ENCODE measurements at regions of chr7 and their contacts with region 1.

Region 1: GRCh38 chr7:148623586-148624282 is 33.2 kb downstream of the C7orf33 start:
- DNase-seq: no peak
- ATAC-seq: no peak
- H3K4me3 ChIP-seq: no peak overlapping the region
- H3K4me3 Mint-ChIP-seq: no peak overlapping the region
- H3K27ac ChIP-seq: no peak overlapping the region
- H3K27ac Mint-ChIP-seq: no peak overlapping the region
- H3K4me1 ChIP-seq: peaks cover 23% of the 10 kb centered on the region
- H3K4me1 Mint-ChIP-seq: peaks cover 50% of the 10 kb centered on the region
- H3K27me3 ChIP-seq: peaks cover 3 to 4% of the 10 kb centered on the region in 2 experiments
- H3K27me3 Mint-ChIP-seq: peaks cover 13% of the 10 kb centered on the region
- CTCF ChIP-seq: no peak

Region 2: GRCh38 chr7:147999962-148000361 is 623.8 kb before region 1 on chr7:
- CTCF ChIA-PET with region 1: no interaction called
- POLR2A ChIA-PET with region 1: no interaction called
- intact Hi-C with region 1: no loop called
- DNase-seq: no peak
- ATAC-seq: no peak
- H3K4me3 ChIP-seq: no peak overlapping the region
- H3K4me3 Mint-ChIP-seq: no peak overlapping the region
- H3K27ac ChIP-seq: no peak overlapping the region
- H3K27ac Mint-ChIP-seq: no peak overlapping the region
- H3K4me1 ChIP-seq: no peaks in the 10 kb centered on the region
- H3K4me1 Mint-ChIP-seq: no peaks in the 10 kb centered on the region
- H3K27me3 ChIP-seq: no peaks in the 10 kb centered on the region
- H3K27me3 Mint-ChIP-seq: no peaks in the 10 kb centered on the region
- CTCF ChIP-seq: no peak

Region 3: DNA sequence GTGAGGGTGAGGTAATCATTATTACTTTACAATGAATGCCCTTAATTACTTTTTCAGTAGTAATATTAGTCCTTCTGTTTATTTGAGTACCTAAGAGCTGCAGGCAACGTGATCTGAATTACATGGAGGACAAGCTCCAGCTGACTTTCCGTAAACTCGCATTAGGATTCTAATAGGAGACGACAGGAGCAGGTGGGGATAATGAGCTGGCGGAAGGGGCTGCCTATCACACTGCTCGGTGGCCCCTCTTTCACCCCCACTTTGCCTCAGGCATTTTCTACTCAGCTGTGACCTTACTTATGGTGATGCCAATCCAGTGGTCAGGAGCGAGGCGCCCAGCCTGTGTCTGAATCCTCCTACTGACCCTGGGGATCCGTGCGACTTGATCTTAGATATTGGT is 33.3 kb before region 1 on chr7 and contains the start of gene C7orf33:
- CTCF ChIA-PET with region 1: no interaction called
- POLR2A ChIA-PET with region 1: no interaction called
- intact Hi-C with region 1: loop called in 1 of 2 experiments (anchors 2 kb)
- DNase-seq: no peak
- ATAC-seq: no peak
- H3K4me3 ChIP-seq: no peak within 1 kb of the TSS
- H3K4me3 Mint-ChIP-seq: no peak within 1 kb of the TSS
- H3K27ac ChIP-seq: no peak within 1 kb of the TSS
- H3K27ac Mint-ChIP-seq: no peak within 1 kb of the TSS
- H3K4me1 ChIP-seq: no peaks in the 10 kb centered on the region
- H3K4me1 Mint-ChIP-seq: no peaks in the 10 kb centered on the region
- H3K27me3 ChIP-seq: no peaks in the 10 kb centered on the region
- H3K27me3 Mint-ChIP-seq: no peaks in the 10 kb centered on the region
- CTCF ChIP-seq: no peak
- total RNA-seq, gene C7orf33: not detected

Region 4: GRCh38 chr7:148763622-148764021 is 139.9 kb after region 1 on chr7:
- CTCF ChIA-PET with region 1: no interaction called
- POLR2A ChIA-PET with region 1: no interaction called
- intact Hi-C with region 1: loop called in 1 of 2 experiments (anchors 10 kb)
- DNase-seq: no peak
- ATAC-seq: no peak
- H3K4me3 ChIP-seq: no peak overlapping the region
- H3K4me3 Mint-ChIP-seq: no peak overlapping the region
- H3K27ac ChIP-seq: no peak overlapping the region
- H3K27ac Mint-ChIP-seq: peak overlapping the region; percentile 14
- H3K4me1 ChIP-seq: no peaks in the 10 kb centered on the region
- H3K4me1 Mint-ChIP-seq: no peaks in the 10 kb centered on the region
- H3K27me3 ChIP-seq: no peaks in the 10 kb centered on the region
- H3K27me3 Mint-ChIP-seq: no peaks in the 10 kb centered on the region
- CTCF ChIP-seq: no peak

Measured in CD4-positive, alpha-beta T cell (primary cell).